ENCODE measurements at regions of chr11 and their contacts with region 1.

Region 1: GRCh38 chr11:118051611-118052461 is 25.0 kb upstream of the TMPRSS4 start:
- DNase-seq: no peak
- H3K4me3 ChIP-seq: no peak overlapping the region
- H3K27ac ChIP-seq: no peak overlapping the region
- H3K4me1 ChIP-seq: no peaks in the 10 kb centered on the region
- H3K27me3 ChIP-seq: no peaks in the 10 kb centered on the region
- CTCF ChIP-seq: no peak
- POLR2A ChIP-seq: no peak

Region 2: GRCh38 chr11:117410861-117411710 is 640.8 kb before region 1 on chr11:
- intact Hi-C with region 1: loop called (anchors 10 kb)
- DNase-seq: no peak
- H3K4me3 ChIP-seq: no peak overlapping the region
- H3K27ac ChIP-seq: no peak overlapping the region
- H3K4me1 ChIP-seq: no peaks in the 10 kb centered on the region
- H3K27me3 ChIP-seq: no peaks in the 10 kb centered on the region
- CTCF ChIP-seq: no peak
- POLR2A ChIP-seq: no peak

Region 3: GRCh38 chr11:117807482-117808327 is 244.1 kb before region 1 on chr11:
- intact Hi-C with region 1: loop called (anchors 10 kb)
- DNase-seq: peak; percentile 84 to 86
- H3K4me3 ChIP-seq: no peak overlapping the region
- H3K27ac ChIP-seq: no peak overlapping the region
- H3K4me1 ChIP-seq: no peaks in the 10 kb centered on the region
- H3K27me3 ChIP-seq: no peaks in the 10 kb centered on the region
- CTCF ChIP-seq: peak; percentile 83 to 91 (median 87)
- POLR2A ChIP-seq: no peak

Region 4: GRCh38 chr11:118807800-118808778 is 756.3 kb after region 1 on chr11:
- intact Hi-C with region 1: no loop called
- DNase-seq: no peak
- H3K4me3 ChIP-seq: no peak overlapping the region
- H3K27ac ChIP-seq: no peak overlapping the region
- H3K4me1 ChIP-seq: no peaks in the 10 kb centered on the region
- H3K27me3 ChIP-seq: no peaks in the 10 kb centered on the region
- CTCF ChIP-seq: no peak
- POLR2A ChIP-seq: no peak

Measured in uterus (tissue), 4 donors.